Heart right ventricle (tissue), 16 donors: ENCODE measurements at regions of chr6 and their contacts with region 1.

Region 1: DNA sequence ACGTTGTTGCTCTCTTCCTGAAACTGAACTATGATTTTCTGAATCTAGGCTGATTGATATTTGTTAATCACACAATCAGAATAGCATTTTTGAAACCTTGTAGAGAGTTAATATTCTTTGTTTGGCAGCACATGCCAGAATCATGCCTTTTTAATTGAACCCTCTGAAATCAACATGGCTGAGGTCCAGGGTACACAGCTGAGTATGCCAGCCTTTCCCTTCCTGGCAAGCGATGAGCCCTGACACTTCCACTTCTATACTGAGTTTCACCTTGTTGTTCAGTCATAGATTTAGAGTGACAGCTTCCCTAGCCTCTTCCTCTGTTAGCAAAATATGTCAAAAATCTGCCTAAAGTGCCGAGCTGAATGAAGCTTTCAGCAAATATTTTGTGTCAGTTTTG is 6.8 kb downstream of the HDDC2 start:
- DNase-seq: peak in 1 of 2 donors; percentile 37
- ATAC-seq: peak in 7 of 8 donors; percentile 60 to 91 (median 85)
- H3K4me3 ChIP-seq: no peak overlapping the region
- H3K27ac ChIP-seq: peak overlapping the region in 9 of 10 donors; percentile 1 to 73 (median 61)
- H3K4me1 ChIP-seq: peaks cover 0 to 69% (median 29%) of the 10 kb centered on the region in 9 donors
- H3K27me3 ChIP-seq: no peaks in the 10 kb centered on the region
- CTCF ChIP-seq: no peak

Region 2: GRCh38 chr6:125153391-125154117 is 141.4 kb before region 1 on chr6 and contains the start of gene TPD52L1:
- intact Hi-C with region 1: loop called in 9 of 10 experiments (anchors 2 to 10 kb)
- DNase-seq: peak; percentile 81
- ATAC-seq: peak; percentile 91 to 97 (median 94)
- H3K4me3 ChIP-seq: peak within 1 kb of the TSS; percentile 62 to 83 (median 74)
- H3K27ac ChIP-seq: peak within 1 kb of the TSS; percentile 66 to 90 (median 80)
- H3K4me1 ChIP-seq: peaks cover 0 to 39% (median 21%) of the 10 kb centered on the region in 9 donors
- H3K27me3 ChIP-seq: peaks cover 0 to 21% (median 0%) of the 10 kb centered on the region in 7 donors
- CTCF ChIP-seq: peak; percentile 66 to 92 (median 85)
- total RNA-seq, gene TPD52L1: 39.4 to 97.8 (median 59.8) TPM

Region 3: DNA sequence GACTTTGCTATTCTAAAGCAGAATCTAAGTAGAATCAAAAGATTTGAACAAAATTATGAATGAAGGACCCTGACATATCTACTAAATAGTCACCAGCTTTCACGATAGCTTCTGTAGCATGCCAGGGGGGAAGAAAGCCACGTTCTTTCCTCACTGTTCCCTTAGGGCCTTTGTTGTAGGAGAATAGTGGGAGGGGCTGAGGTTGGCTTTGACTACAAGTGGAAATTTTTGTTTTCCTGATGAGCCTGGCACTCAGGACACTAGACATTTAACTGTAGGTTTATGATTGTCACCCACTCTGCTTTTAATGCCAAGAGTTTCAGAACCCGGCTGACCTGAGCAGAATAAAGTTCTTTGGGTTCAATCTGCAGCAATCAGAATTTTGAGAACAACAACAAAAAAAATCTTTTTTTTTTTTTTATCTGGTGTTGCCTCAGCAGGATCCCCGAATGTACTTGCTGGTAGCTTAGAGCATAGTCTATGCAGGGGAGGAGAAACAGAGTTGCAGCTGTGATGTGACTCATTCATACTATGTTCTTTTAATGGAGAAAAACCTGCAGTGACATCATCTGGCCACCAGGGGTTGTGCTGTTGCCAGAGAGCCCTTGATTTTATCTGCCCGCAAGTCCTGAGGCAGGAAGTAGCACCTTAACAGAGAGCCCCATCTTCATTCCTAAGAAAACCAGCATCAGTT is 102.9 kb before region 1 on chr6:
- intact Hi-C with region 1: loop called in 4 of 10 experiments (anchors 2 to 10 kb)
- DNase-seq: peak; percentile 20 to 36
- ATAC-seq: peak in 7 of 8 donors; percentile 24 to 81 (median 66)
- H3K4me3 ChIP-seq: no peak overlapping the region
- H3K27ac ChIP-seq: no peak overlapping the region
- H3K4me1 ChIP-seq: peaks cover 4 to 69% (median 46%) of the 10 kb centered on the region in 9 donors
- H3K27me3 ChIP-seq: no peaks in the 10 kb centered on the region
- CTCF ChIP-seq: peak; percentile 66 to 84 (median 69)

Region 4: GRCh38 chr6:125197795-125198269 is 97.1 kb before region 1 on chr6:
- intact Hi-C with region 1: loop called in 3 of 10 experiments (anchors 5 to 10 kb)
- DNase-seq: peak; percentile 37 to 71
- ATAC-seq: peak; percentile 89 to 98 (median 92)
- H3K4me3 ChIP-seq: peak overlapping the region in 1 of 10 donors; percentile 8
- H3K27ac ChIP-seq: peak overlapping the region; percentile 48 to 92 (median 80)
- H3K4me1 ChIP-seq: peaks cover 0 to 71% (median 50%) of the 10 kb centered on the region in 9 donors
- H3K27me3 ChIP-seq: no peaks in the 10 kb centered on the region
- CTCF ChIP-seq: no peak

Region 5: DNA sequence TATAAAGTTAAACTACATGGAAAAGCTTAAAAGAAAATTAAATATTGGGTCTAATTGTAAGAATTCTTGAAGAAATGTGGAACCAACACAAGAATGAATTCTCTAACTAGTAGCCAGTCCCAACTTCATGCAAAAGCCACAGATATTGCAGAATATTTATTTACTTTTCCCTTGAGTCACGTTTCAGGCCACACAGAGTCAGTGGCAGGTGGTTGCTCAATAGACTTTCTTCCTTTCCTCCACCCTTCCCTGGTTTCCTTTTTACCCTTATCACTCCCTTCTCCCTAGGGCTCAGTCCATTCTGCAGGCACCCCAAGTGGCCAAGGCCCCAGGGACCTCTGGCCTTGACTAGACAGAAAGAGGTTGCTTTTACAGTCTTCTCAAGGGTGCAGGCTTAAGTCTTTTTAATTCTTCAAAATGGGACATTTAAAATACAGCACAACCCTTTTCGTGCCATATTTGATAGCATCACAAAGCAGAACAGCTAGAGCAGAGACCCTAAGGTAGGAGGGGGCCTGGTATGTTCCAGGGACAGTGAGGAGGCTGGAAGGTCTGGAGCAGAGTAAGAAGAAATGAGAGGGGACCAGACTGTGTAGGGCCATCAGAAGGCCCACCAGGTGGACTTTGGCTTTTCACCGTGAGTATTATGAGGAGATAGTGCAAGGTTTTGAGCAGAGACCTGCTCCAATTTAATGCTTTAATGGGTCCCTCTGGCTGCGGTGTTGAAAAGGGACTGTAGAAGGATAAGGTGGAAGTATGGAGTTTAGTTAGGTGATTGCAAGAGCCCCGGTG is 58.2 kb before region 1 on chr6:
- intact Hi-C with region 1: loop called in 1 of 10 experiments (anchors 10 kb)
- DNase-seq: no peak
- ATAC-seq: no peak
- H3K4me3 ChIP-seq: no peak overlapping the region
- H3K27ac ChIP-seq: no peak overlapping the region
- H3K4me1 ChIP-seq: peaks cover 0 to 21% (median 7%) of the 10 kb centered on the region in 9 donors
- H3K27me3 ChIP-seq: no peaks in the 10 kb centered on the region
- CTCF ChIP-seq: no peak

Region 6: GRCh38 chr6:125279961-125280360 is 15.0 kb before region 1 on chr6:
- intact Hi-C with region 1: loop called in 1 of 10 experiments (anchors 1 kb)
- DNase-seq: no peak
- ATAC-seq: no peak
- H3K4me3 ChIP-seq: no peak overlapping the region
- H3K27ac ChIP-seq: no peak overlapping the region
- H3K4me1 ChIP-seq: peaks cover 0 to 4% (median 0%) of the 10 kb centered on the region in 9 donors
- H3K27me3 ChIP-seq: no peaks in the 10 kb centered on the region
- CTCF ChIP-seq: no peak

Region 7: GRCh38 chr6:125546841-125547251 is 251.9 kb after region 1 on chr6:
- intact Hi-C with region 1: no loop called
- DNase-seq: no peak
- ATAC-seq: peak in 3 of 8 donors; percentile 42 to 74 (median 57)
- H3K4me3 ChIP-seq: no peak overlapping the region
- H3K27ac ChIP-seq: no peak overlapping the region
- H3K4me1 ChIP-seq: peaks cover 0 to 9% (median 0%) of the 10 kb centered on the region in 9 donors
- H3K27me3 ChIP-seq: no peaks in the 10 kb centered on the region
- CTCF ChIP-seq: peak in 2 of 9 donors; percentile 27 to 29